Caco-2 (cell line): ENCODE measurements at regions of chr2 and their contacts with region 1.

Region 1: GRCh38 chr2:121530212-121530705 is 421 bp upstream of the RNU4ATAC start:
- DNase-seq: peak; percentile 83 to 85
- H3K4me3 ChIP-seq: peak overlapping the region; percentile 51
- H3K4me3 Mint-ChIP-seq: peak overlapping the region; percentile 92
- H3K27ac Mint-ChIP-seq: peak overlapping the region; percentile 97
- H3K4me1 ChIP-seq: peaks cover 10% of the 10 kb centered on the region
- H3K4me1 Mint-ChIP-seq: peaks cover 20% of the 10 kb centered on the region
- H3K27me3 ChIP-seq: no peaks in the 10 kb centered on the region
- H3K27me3 Mint-ChIP-seq: no peaks in the 10 kb centered on the region
- CTCF ChIP-seq: no peak

Region 2: GRCh38 chr2:121076885-121077549 is 453.2 kb before region 1 on chr2:
- CTCF ChIA-PET with region 1: no interaction called
- POLR2A ChIA-PET with region 1: interaction called, 11 read pairs
- intact Hi-C with region 1: no loop called
- DNase-seq: peak; percentile 82 to 90
- H3K4me3 ChIP-seq: no peak overlapping the region
- H3K4me3 Mint-ChIP-seq: no peak overlapping the region
- H3K27ac Mint-ChIP-seq: no peak overlapping the region
- H3K4me1 ChIP-seq: peaks cover 20% of the 10 kb centered on the region
- H3K4me1 Mint-ChIP-seq: no peaks in the 10 kb centered on the region
- H3K27me3 ChIP-seq: no peaks in the 10 kb centered on the region
- H3K27me3 Mint-ChIP-seq: no peaks in the 10 kb centered on the region
- CTCF ChIP-seq: peak; percentile 97 to 98

Region 3: GRCh38 chr2:121470917-121471316 is 59.3 kb before region 1 on chr2:
- CTCF ChIA-PET with region 1: no interaction called
- POLR2A ChIA-PET with region 1: no interaction called
- intact Hi-C with region 1: no loop called
- DNase-seq: no peak
- H3K4me3 ChIP-seq: no peak overlapping the region
- H3K4me3 Mint-ChIP-seq: no peak overlapping the region
- H3K27ac Mint-ChIP-seq: no peak overlapping the region
- H3K4me1 ChIP-seq: peaks cover 12% of the 10 kb centered on the region
- H3K4me1 Mint-ChIP-seq: peaks cover 17% of the 10 kb centered on the region
- H3K27me3 ChIP-seq: no peaks in the 10 kb centered on the region
- H3K27me3 Mint-ChIP-seq: no peaks in the 10 kb centered on the region
- CTCF ChIP-seq: no peak

Region 4: GRCh38 chr2:121596221-121597080 is 66.2 kb after region 1 on chr2:
- CTCF ChIA-PET with region 1: interaction called, 5 read pairs
- POLR2A ChIA-PET with region 1: no interaction called
- intact Hi-C with region 1: loop called (anchors 2 kb)
- DNase-seq: peak in 1 of 2 experiments; percentile 54
- H3K4me3 ChIP-seq: no peak overlapping the region
- H3K4me3 Mint-ChIP-seq: peak overlapping the region; percentile 20
- H3K27ac Mint-ChIP-seq: peak overlapping the region; percentile 37
- H3K4me1 ChIP-seq: peaks cover 3% of the 10 kb centered on the region; the same call in 1 of the 2 replicates
- H3K4me1 Mint-ChIP-seq: peaks cover 10% of the 10 kb centered on the region
- H3K27me3 ChIP-seq: no peaks in the 10 kb centered on the region
- H3K27me3 Mint-ChIP-seq: no peaks in the 10 kb centered on the region
- CTCF ChIP-seq: peak in 1 of 2 experiments; percentile 64

Region 5: GRCh38 chr2:121707920-121708361 is 177.7 kb after region 1 on chr2:
- CTCF ChIA-PET with region 1: no interaction called
- POLR2A ChIA-PET with region 1: interaction called, 25 read pairs
- intact Hi-C with region 1: no loop called
- DNase-seq: peak; percentile 78 to 82
- H3K4me3 ChIP-seq: peak overlapping the region; percentile 11; the same call in 1 of the 2 replicates
- H3K4me3 Mint-ChIP-seq: peak overlapping the region; percentile 72
- H3K27ac Mint-ChIP-seq: peak overlapping the region; percentile 96
- H3K4me1 ChIP-seq: peaks cover 17% of the 10 kb centered on the region; the same call in 1 of the 2 replicates
- H3K4me1 Mint-ChIP-seq: peaks cover 27% of the 10 kb centered on the region
- H3K27me3 ChIP-seq: no peaks in the 10 kb centered on the region
- H3K27me3 Mint-ChIP-seq: no peaks in the 10 kb centered on the region
- CTCF ChIP-seq: no peak

Region 6: GRCh38 chr2:121736462-121737341 is 206.4 kb after region 1 on chr2 and contains the start of gene NIFK:
- CTCF ChIA-PET with region 1: no interaction called
- POLR2A ChIA-PET with region 1: interaction called, 8 read pairs
- intact Hi-C with region 1: loop called (anchors 1 kb)
- DNase-seq: peak; percentile 99 to 100
- H3K4me3 ChIP-seq: peak within 1 kb of the TSS; percentile 82
- H3K4me3 Mint-ChIP-seq: peak within 1 kb of the TSS; percentile 98
- H3K27ac Mint-ChIP-seq: peak within 1 kb of the TSS; percentile 96
- H3K4me1 ChIP-seq: peaks cover 14% of the 10 kb centered on the region
- H3K4me1 Mint-ChIP-seq: peaks cover 15% of the 10 kb centered on the region
- H3K27me3 ChIP-seq: no peaks in the 10 kb centered on the region
- H3K27me3 Mint-ChIP-seq: no peaks in the 10 kb centered on the region
- CTCF ChIP-seq: no peak
- total RNA-seq, gene NIFK: 84.7 and 104 TPM in 2 replicates

Region 7: GRCh38 chr2:121777699-121778058 is 247.4 kb after region 1 on chr2:
- CTCF ChIA-PET with region 1: no interaction called
- POLR2A ChIA-PET with region 1: interaction called, 5 read pairs
- intact Hi-C with region 1: loop called (anchors 2 kb)
- DNase-seq: peak in 1 of 2 experiments; percentile 18
- H3K4me3 ChIP-seq: peak overlapping the region; percentile 37
- H3K4me3 Mint-ChIP-seq: peak overlapping the region; percentile 71
- H3K27ac Mint-ChIP-seq: peak overlapping the region; percentile 93
- H3K4me1 ChIP-seq: peaks cover 38% of the 10 kb centered on the region
- H3K4me1 Mint-ChIP-seq: peaks cover 25% of the 10 kb centered on the region
- H3K27me3 ChIP-seq: no peaks in the 10 kb centered on the region
- H3K27me3 Mint-ChIP-seq: no peaks in the 10 kb centered on the region
- CTCF ChIP-seq: no peak